Left cardiac atrium (tissue), 4 donors: ENCODE measurements at regions of chr15 and their contacts with region 1.

Region 1: DNA sequence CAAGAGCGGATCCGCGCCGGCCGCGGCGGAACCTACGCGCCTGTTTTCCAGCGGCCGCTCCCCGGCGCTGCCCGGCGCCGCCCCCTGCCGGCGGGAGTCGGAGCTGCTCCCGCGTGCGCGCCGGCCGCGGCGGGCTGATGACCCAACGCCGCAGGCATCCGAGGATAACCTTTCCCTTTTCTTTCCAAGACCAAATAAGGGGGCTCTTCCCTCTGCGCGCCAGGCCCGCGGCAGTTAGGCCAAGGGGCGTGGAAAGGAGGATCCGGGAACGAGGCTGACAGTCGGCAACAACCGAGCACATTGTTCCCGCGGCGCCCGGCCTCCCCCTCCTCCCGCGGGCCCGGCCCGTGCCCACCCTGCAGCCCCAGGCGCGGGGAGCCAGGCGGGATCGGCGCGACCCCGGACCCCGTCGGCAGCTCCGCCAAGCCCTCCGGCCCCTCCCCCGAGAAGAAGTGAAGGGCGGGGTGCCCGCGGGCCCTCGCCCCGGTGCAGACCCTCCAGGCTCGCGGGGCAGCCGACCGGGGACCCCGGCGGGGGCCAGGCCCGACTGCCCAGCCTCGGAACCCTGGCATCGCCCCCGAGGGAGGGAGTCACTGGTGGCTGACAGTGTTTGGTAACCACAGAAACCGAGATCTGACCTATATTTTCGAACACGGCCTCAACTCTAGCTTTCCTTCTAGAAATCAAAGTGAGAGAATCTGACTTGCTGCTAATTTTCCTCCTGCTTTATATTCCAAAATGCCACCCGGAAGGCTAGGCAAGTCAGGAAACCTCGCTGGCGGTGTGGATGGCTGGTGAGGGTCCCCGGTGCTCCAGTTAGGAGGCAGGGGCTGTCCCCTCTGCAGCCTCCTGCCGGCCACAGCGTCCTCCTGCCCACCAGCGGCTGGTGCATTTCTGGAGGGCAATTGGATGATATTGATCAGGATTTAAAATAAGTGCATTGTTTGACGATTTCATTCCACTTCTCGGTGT is 45.6 kb upstream of the SYNM start:
- DNase-seq: peak; percentile 86
- ATAC-seq: peak; percentile 95

Region 2: GRCh38 chr15:98647774-98648653 is 411.3 kb before region 1 on chr15 and contains the start of gene IGF1R:
- intact Hi-C with region 1: loop called (anchors 2 to 5 kb)
- DNase-seq: peak; percentile 87
- ATAC-seq: peak; percentile 81 to 82
- total RNA-seq, gene IGF1R: 27.3 to 56.2 TPM

Region 3: GRCh38 chr15:98954411-98954810 is 104.9 kb before region 1 on chr15:
- intact Hi-C with region 1: loop called in 1 of 2 experiments (anchors 5 kb)
- DNase-seq: peak; percentile 86
- ATAC-seq: peak; percentile 71 to 80